ENCODE measurements at regions of chr5 and their contacts with region 1.

Region 1: GRCh38 chr5:1641560-1642166 is 117.9 kb upstream of the LPCAT1 start:
- DNase-seq: peak; percentile 82
- ATAC-seq: peak; percentile 74
- H3K4me3 ChIP-seq: peak overlapping the region in 1 of 3 experiments; percentile 43; a peak in 1 of 6 replicates
- H3K27ac ChIP-seq: no peak overlapping the region
- H3K4me1 ChIP-seq: peaks cover 21% of the 10 kb centered on the region; the same call in 1 of the 2 replicates
- H3K27me3 ChIP-seq: peaks cover 15 to 56% of the 10 kb centered on the region in 2 experiments
- CTCF ChIP-seq: peak; percentile 94
- EP300 ChIP-seq: no peak
- POLR2A ChIP-seq: no peak
- RAD21 ChIP-seq: peak; percentile 67

Region 2: GRCh38 chr5:1174122-1174936 is 467.3 kb before region 1 on chr5:
- CTCF ChIA-PET with region 1: no interaction called
- POLR2A ChIA-PET with region 1: no interaction called
- in situ Hi-C with region 1: loop called (anchors 10 kb)
- intact Hi-C with region 1: no loop called
- DNase-seq: peak; percentile 88
- ATAC-seq: peak; percentile 75
- H3K4me3 ChIP-seq: peak overlapping the region in 1 of 3 experiments; percentile 13; a peak in 1 of 6 replicates
- H3K27ac ChIP-seq: no peak overlapping the region
- H3K4me1 ChIP-seq: peaks cover 43% of the 10 kb centered on the region
- H3K27me3 ChIP-seq: peaks cover 0 to 15% of the 10 kb centered on the region in 2 experiments; a peak in 3 of 5 replicates
- CTCF ChIP-seq: peak; percentile 90
- EP300 ChIP-seq: no peak
- POLR2A ChIP-seq: no peak
- RAD21 ChIP-seq: peak; percentile 88

Region 3: DNA sequence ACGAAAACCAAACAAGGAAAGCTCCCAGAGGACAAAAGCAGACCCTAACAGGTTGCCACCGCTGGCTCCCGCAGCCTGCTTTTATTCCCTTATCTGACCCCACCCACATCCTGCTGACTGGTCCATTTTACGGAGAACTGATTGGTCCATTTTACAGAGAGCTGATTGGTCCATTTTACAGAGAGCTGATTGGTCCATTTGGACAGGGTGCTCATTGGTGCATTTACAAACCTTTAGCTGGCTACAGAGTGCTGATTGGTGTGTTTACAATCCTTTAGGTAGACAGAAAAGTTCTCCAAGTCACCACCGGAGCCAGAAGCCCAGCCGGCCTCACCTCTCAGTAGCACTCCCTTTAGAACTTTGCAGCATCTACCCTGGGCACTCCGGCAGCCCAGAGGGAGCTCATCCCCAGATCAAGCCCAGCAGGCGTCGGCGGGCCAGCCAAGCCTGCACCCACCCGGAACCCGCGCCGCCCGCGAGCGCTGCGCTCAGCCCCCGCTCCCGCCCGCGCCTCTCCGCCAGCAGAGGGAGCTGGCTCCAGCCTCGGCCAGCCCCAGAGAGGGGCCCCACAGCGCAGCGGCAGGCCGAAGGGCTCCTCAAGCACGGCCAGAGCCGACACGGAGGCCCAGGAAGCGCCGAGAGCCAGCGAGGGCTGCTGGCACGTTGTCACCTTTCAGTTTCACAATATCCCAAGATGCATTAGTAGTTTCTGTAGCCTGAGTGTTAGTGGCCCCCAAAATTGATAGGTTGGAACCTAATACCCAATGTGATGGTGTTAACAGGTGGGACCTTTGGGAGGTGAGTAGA is 261.4 kb before region 1 on chr5:
- CTCF ChIA-PET with region 1: interaction called, 13 read pairs
- POLR2A ChIA-PET with region 1: no interaction called
- in situ Hi-C with region 1: loop called (anchors 10 kb)
- intact Hi-C with region 1: loop called (anchors 1 kb)
- DNase-seq: peak; percentile 37
- ATAC-seq: peak; percentile 96
- H3K4me3 ChIP-seq: peak overlapping the region in 1 of 3 experiments; percentile 22; a peak in 1 of 6 replicates
- H3K27ac ChIP-seq: no peak overlapping the region
- H3K4me1 ChIP-seq: peaks cover 12% of the 10 kb centered on the region
- H3K27me3 ChIP-seq: peaks cover 16 to 81% of the 10 kb centered on the region in 2 experiments
- CTCF ChIP-seq: peak; percentile 80
- EP300 ChIP-seq: no peak
- POLR2A ChIP-seq: no peak
- RAD21 ChIP-seq: peak; percentile 85

Region 4: DNA sequence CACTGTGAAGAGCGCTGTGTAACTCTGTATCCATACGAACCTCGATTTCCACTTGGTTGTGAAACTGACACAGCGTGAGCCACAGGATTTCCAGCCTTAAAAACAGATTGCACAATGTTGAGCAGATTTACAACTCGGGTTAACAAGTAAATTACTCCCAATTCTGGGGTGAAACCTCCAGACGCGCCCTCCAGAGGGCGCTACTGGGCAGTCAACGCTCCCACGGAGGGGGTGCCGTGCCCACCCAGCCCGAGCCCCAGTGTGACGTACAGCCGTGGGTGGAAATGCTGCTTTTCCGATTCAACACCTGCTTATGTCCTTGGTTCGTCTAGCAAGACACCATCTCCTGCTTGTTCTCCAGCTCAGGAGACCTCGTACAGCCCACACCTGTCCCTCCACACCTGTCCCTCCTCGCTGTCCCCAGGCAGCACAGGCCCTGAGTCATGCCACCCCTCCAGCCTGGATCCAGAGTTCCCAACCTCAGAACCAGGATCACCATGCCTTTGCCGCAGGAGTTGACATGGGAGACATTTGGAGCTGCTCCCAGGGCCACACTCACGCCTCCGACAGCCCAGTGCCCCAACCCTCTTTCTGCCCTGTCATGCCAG is 162.0 kb before region 1 on chr5:
- CTCF ChIA-PET with region 1: interaction called, 8 read pairs
- POLR2A ChIA-PET with region 1: no interaction called
- in situ Hi-C with region 1: no loop called
- intact Hi-C with region 1: loop called (anchors 5 kb)
- DNase-seq: peak; percentile 23
- ATAC-seq: peak; percentile 27
- H3K4me3 ChIP-seq: no peak overlapping the region
- H3K27ac ChIP-seq: no peak overlapping the region
- H3K4me1 ChIP-seq: no peaks in the 10 kb centered on the region
- H3K27me3 ChIP-seq: no peaks in the 10 kb centered on the region
- CTCF ChIP-seq: peak; percentile 74
- EP300 ChIP-seq: no peak
- POLR2A ChIP-seq: no peak
- RAD21 ChIP-seq: peak; percentile 66

Region 5: DNA sequence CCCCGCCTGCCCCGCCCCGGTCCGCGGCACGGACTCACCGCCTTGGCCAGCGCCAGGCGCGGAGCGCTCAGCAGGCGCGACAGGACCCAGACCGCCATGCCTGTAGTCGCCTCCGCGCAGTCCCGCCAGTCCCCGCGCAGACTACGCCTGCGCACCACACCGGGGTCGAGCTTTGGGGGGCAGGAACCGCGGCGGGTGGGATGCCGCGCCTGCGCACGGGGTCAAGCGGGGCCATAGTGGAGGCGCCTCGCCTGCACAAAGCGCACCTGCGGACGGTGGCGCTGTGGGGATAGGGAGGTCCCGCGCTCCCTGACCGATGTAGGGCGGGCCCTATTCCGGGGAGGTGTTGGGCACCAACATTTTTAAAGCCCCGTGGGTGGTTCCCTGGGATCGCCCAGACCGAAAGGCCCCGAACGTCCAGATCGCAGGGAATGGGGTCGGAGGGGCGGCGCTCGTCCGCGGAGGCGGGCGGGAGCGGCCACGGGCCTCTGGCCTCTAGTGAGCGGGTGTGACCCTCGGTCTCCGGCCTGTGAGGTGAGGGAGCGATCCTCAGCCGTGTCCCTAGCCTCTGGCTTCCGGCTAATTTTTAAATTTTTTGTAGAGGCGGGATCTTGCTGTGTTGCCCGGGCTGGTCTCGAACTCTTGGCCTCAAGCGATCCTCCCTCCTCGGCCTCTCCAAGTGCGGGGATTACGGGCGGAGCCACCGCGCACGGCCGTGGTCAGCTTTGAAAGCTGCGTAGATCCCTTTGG is 47.1 kb before region 1 on chr5:
- CTCF ChIA-PET with region 1: no interaction called
- POLR2A ChIA-PET with region 1: no interaction called
- in situ Hi-C with region 1: no loop called
- intact Hi-C with region 1: loop called (anchors 1 kb)
- DNase-seq: peak; percentile 87
- ATAC-seq: peak; percentile 96
- H3K4me3 ChIP-seq: peak overlapping the region; percentile 76 to 98 (median 84)
- H3K27ac ChIP-seq: peak overlapping the region; percentile 71
- H3K4me1 ChIP-seq: peaks cover 40% of the 10 kb centered on the region
- H3K27me3 ChIP-seq: no peaks in the 10 kb centered on the region
- CTCF ChIP-seq: peak; percentile 92
- EP300 ChIP-seq: no peak
- POLR2A ChIP-seq: peak; percentile 33 to 85; a peak in 2 of 4 replicates
- RAD21 ChIP-seq: peak; percentile 66

Region 6: GRCh38 chr5:1673042-1673677 is 31.5 kb after region 1 on chr5:
- CTCF ChIA-PET with region 1: no interaction called
- POLR2A ChIA-PET with region 1: no interaction called
- in situ Hi-C with region 1: no loop called
- intact Hi-C with region 1: no loop called
- DNase-seq: no peak
- ATAC-seq: peak; percentile 75
- H3K4me3 ChIP-seq: no peak overlapping the region
- H3K27ac ChIP-seq: no peak overlapping the region
- H3K4me1 ChIP-seq: peaks cover 4% of the 10 kb centered on the region; the same call in 1 of the 2 replicates
- H3K27me3 ChIP-seq: peaks cover 0 to 44% of the 10 kb centered on the region in 2 experiments; a peak in 2 of 5 replicates
- CTCF ChIP-seq: no peak
- EP300 ChIP-seq: no peak
- POLR2A ChIP-seq: no peak
- RAD21 ChIP-seq: no peak